ENCODE measurements at regions of chr6 and their contacts with region 1.

Region 1: GRCh38 chr6:150016324-150017185 is 8.8 kb downstream of the RAET1L start:
- DNase-seq: peak in 8 of 9 donors; percentile 38 to 77 (median 68)
- ATAC-seq: peak; percentile 85
- H3K4me3 ChIP-seq: no peak overlapping the region
- H3K4me3 Mint-ChIP-seq: no peak overlapping the region
- H3K27ac ChIP-seq: no peak overlapping the region
- H3K27ac Mint-ChIP-seq: peak overlapping the region in 1 of 9 donors; percentile 1
- H3K4me1 ChIP-seq: peaks cover 0 to 2% of the 10 kb centered on the region in 2 donors
- H3K4me1 Mint-ChIP-seq: peaks cover 10 to 23% (median 15%) of the 10 kb centered on the region in 7 donors
- H3K27me3 ChIP-seq: peaks cover 11 to 16% of the 10 kb centered on the region in 2 donors
- H3K27me3 Mint-ChIP-seq: peaks cover 60 to 80% (median 66%) of the 10 kb centered on the region in 5 donors

Region 2: GRCh38 chr6:149834513-149835481 is 181.8 kb before region 1 on chr6:
- CTCF ChIA-PET with region 1: interaction called, 4 read pairs
- POLR2A ChIA-PET with region 1: no interaction called
- intact Hi-C with region 1: loop called (anchors 1 kb)
- DNase-seq: peak; percentile 50 to 85 (median 75)
- ATAC-seq: peak; percentile 92
- H3K4me3 ChIP-seq: no peak overlapping the region
- H3K4me3 Mint-ChIP-seq: no peak overlapping the region
- H3K27ac ChIP-seq: no peak overlapping the region
- H3K27ac Mint-ChIP-seq: no peak overlapping the region
- H3K4me1 ChIP-seq: no peaks in the 10 kb centered on the region
- H3K4me1 Mint-ChIP-seq: peaks cover 0 to 5% (median 4%) of the 10 kb centered on the region in 7 donors
- H3K27me3 ChIP-seq: no peaks in the 10 kb centered on the region
- H3K27me3 Mint-ChIP-seq: peaks cover 0 to 19% (median 4%) of the 10 kb centered on the region in 5 donors

Region 3: DNA sequence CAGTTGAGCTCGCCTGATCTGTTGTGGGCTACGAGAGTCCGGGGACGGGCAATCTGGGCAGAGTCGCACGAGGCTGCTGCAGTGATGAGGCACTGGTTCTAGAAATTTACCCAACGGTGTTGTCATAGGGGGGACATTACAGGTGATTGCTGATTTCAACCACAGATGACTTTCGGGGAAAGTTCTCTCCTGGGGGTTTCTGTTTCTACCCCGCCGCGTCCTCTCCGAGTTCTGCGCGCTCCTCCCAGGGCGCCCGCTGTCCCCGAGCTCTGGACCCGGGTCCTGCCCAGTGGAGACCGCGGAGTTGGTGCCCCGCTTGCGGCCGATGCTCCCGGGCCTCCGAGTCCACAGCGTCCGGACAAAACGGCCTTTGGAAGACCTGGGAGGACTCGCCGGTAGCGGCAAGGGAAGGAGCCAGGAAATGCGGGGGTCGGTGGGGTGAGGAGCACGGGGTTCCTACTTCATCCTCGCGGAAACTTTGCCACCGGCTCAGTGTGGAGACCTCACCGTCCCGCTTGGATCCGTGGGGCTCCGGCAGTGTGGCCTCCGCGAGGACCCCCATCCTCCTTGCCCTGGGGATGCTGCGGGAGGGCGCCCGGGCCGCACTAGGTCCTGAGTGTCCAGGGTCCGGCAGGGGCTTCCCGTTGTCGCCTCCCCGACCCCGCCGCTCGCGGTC is 21.1 kb after region 1 on chr6:
- CTCF ChIA-PET with region 1: no interaction called
- POLR2A ChIA-PET with region 1: no interaction called
- intact Hi-C with region 1: no loop called
- DNase-seq: no peak
- ATAC-seq: peak; percentile 11
- H3K4me3 ChIP-seq: no peak overlapping the region
- H3K4me3 Mint-ChIP-seq: peak overlapping the region; percentile 63 to 89 (median 79)
- H3K27ac ChIP-seq: no peak overlapping the region
- H3K27ac Mint-ChIP-seq: no peak overlapping the region
- H3K4me1 ChIP-seq: peaks cover 0 to 6% of the 10 kb centered on the region in 2 donors
- H3K4me1 Mint-ChIP-seq: peaks cover 7 to 17% (median 9%) of the 10 kb centered on the region in 7 donors
- H3K27me3 ChIP-seq: peaks cover 0 to 21% of the 10 kb centered on the region in 2 donors
- H3K27me3 Mint-ChIP-seq: peaks cover 80 to 89% (median 82%) of the 10 kb centered on the region in 5 donors

Region 4: GRCh38 chr6:150068720-150069648 is 52.4 kb after region 1 on chr6 and contains the start of gene ULBP3:
- CTCF ChIA-PET with region 1: no interaction called
- POLR2A ChIA-PET with region 1: no interaction called
- intact Hi-C with region 1: loop called in 1 of 2 experiments (anchors 2 kb)
- DNase-seq: peak; percentile 24 to 75 (median 35)
- ATAC-seq: peak; percentile 83
- H3K4me3 ChIP-seq: peak within 1 kb of the TSS; percentile 77
- H3K4me3 Mint-ChIP-seq: peak within 1 kb of the TSS; percentile 80 to 95 (median 90)
- H3K27ac ChIP-seq: no peak within 1 kb of the TSS
- H3K27ac Mint-ChIP-seq: peak within 1 kb of the TSS in 4 of 9 donors; percentile 49 to 82 (median 72)
- H3K4me1 ChIP-seq: peaks cover 0 to 5% of the 10 kb centered on the region in 2 donors
- H3K4me1 Mint-ChIP-seq: peaks cover 10 to 22% (median 14%) of the 10 kb centered on the region in 7 donors
- H3K27me3 ChIP-seq: no peaks in the 10 kb centered on the region
- H3K27me3 Mint-ChIP-seq: peaks cover 4 to 35% (median 12%) of the 10 kb centered on the region in 5 donors
- total RNA-seq, gene ULBP3: 0.42 to 1.5 TPM in 2 of 5 experiments, not detected in the others

Measured in naive thymus-derived CD4-positive, alpha-beta T cell (primary cell).